ENCODE measurements at regions of chr7 and their contacts with region 1.

Region 1: DNA sequence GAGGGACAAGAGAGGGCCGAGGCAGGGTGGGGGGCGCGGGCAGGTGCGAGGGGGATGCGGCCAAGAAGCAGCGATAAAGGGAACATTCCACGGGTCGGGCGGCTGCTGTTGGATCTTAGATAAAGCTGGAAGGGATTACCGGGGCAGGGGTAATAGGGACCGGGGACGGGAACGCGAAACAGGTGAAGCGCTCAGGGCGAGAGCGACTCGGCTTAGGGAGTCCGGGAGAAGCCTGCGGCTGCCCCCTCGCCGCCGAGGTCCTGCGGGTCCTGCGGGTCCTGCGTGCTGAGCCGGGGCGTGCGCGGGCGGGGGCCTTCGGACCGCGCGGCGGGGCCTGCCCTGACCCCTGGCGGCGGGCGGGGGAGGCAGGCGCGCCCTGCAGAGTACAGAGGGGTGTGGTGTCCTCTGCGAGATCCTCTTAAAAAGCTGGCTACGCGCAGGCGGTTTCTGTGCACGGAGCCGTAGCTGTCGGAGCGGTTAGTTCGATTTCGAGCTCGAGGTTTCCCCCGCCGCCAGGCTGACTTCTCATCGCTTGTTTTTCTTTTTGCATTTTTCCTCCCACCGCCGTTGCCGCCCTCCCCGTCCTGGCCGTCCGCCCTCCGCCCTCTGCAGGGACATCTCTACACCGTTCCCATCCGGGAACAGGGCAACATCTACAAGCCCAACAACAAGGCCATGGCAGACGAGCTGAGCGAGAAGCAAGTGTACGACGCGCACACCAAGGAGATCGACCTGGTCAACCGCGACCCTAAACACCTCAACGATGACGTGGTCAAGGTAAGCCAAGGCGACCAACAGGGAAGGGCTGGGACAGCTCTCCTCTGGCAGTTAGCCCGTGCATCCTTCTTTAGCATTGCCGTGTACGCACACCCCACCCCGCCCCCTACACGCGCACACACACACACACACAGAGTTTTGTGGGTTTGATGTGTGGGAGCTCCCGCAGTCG is 1.4 kb downstream of the CAV1 start:
- DNase-seq: peak; percentile 88 to 94 (median 94)
- ATAC-seq: peak; percentile 97
- H3K4me3 ChIP-seq: peak overlapping the region; percentile 50
- H3K27ac ChIP-seq: no peak overlapping the region
- H3K4me1 ChIP-seq: peaks cover 21 to 24% of the 10 kb centered on the region in 2 experiments
- H3K27me3 ChIP-seq: peaks cover 0 to 7% of the 10 kb centered on the region in 2 experiments; a peak in 2 of 5 replicates
- CTCF ChIP-seq: peak; percentile 77 to 91 (median 80)
- EP300 ChIP-seq: no peak
- POLR2A ChIP-seq: no peak
- RAD21 ChIP-seq: peak; percentile 96 to 98

Region 2: GRCh38 chr7:116340943-116341907 is 185.0 kb before region 1 on chr7:
- CTCF ChIA-PET with region 1: no interaction called
- POLR2A ChIA-PET with region 1: no interaction called
- in situ Hi-C with region 1: no loop called
- intact Hi-C with region 1: no loop called
- DNase-seq: peak in 2 of 4 experiments; percentile 32 to 53
- ATAC-seq: peak; percentile 96
- H3K4me3 ChIP-seq: no peak overlapping the region
- H3K27ac ChIP-seq: no peak overlapping the region
- H3K4me1 ChIP-seq: peaks cover 0 to 16% of the 10 kb centered on the region in 2 experiments; a peak in 3 of 5 replicates
- H3K27me3 ChIP-seq: no peaks in the 10 kb centered on the region
- CTCF ChIP-seq: peak; percentile 57 to 59 (median 57)
- EP300 ChIP-seq: no peak
- POLR2A ChIP-seq: no peak
- RAD21 ChIP-seq: peak; percentile 74 to 79

Region 3: DNA sequence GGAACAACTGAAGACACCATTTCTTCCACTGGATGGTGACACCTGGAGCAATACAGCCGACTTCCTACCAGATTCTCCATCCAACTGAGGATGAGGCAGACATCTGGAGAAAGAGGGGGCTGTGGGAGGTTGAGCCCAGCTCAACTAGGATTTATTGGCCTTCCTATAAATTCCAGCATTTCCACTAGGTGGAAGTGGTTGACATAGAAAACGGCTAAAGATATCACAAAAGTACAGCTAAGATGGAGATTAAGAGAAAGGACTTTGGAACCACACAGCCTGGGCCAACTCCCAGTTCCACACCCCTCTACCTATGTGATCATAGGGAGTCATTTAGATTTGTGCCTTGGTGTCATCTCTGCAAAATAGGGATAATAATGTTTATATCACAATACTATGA is 87.9 kb before region 1 on chr7:
- CTCF ChIA-PET with region 1: interaction called, 8 read pairs
- POLR2A ChIA-PET with region 1: no interaction called
- in situ Hi-C with region 1: no loop called
- intact Hi-C with region 1: loop called (anchors 1 kb)
- DNase-seq: peak in 2 of 4 experiments; percentile 20 to 49
- ATAC-seq: peak; percentile 79
- H3K4me3 ChIP-seq: no peak overlapping the region
- H3K27ac ChIP-seq: no peak overlapping the region
- H3K4me1 ChIP-seq: peaks cover 8 to 25% of the 10 kb centered on the region in 2 experiments; a peak in 3 of 5 replicates
- H3K27me3 ChIP-seq: no peaks in the 10 kb centered on the region; a peak in 1 of 5 replicates
- CTCF ChIP-seq: peak; percentile 32 to 71 (median 50); a peak in 4 of 6 replicates
- EP300 ChIP-seq: no peak
- POLR2A ChIP-seq: no peak
- RAD21 ChIP-seq: peak; percentile 70 to 80

Region 4: GRCh38 chr7:116451958-116452729 is 74.0 kb before region 1 on chr7:
- CTCF ChIA-PET with region 1: interaction called, 4 read pairs
- POLR2A ChIA-PET with region 1: interaction called, 5 read pairs
- in situ Hi-C with region 1: no loop called
- intact Hi-C with region 1: loop called (anchors 2 kb)
- DNase-seq: no peak
- ATAC-seq: peak; percentile 58
- H3K4me3 ChIP-seq: no peak overlapping the region
- H3K27ac ChIP-seq: no peak overlapping the region
- H3K4me1 ChIP-seq: no peaks in the 10 kb centered on the region
- H3K27me3 ChIP-seq: no peaks in the 10 kb centered on the region
- CTCF ChIP-seq: peak; percentile 2 to 38 (median 36); a peak in 2 of 6 replicates
- EP300 ChIP-seq: no peak
- POLR2A ChIP-seq: no peak
- RAD21 ChIP-seq: peak in 1 of 2 experiments; percentile 49; a peak in 3 of 4 replicates

Measured in K562 (cell line).